CD4-positive, alpha-beta memory T cell (primary cell): ENCODE measurements at regions of chr10 and their contacts with region 1.

Region 1: DNA sequence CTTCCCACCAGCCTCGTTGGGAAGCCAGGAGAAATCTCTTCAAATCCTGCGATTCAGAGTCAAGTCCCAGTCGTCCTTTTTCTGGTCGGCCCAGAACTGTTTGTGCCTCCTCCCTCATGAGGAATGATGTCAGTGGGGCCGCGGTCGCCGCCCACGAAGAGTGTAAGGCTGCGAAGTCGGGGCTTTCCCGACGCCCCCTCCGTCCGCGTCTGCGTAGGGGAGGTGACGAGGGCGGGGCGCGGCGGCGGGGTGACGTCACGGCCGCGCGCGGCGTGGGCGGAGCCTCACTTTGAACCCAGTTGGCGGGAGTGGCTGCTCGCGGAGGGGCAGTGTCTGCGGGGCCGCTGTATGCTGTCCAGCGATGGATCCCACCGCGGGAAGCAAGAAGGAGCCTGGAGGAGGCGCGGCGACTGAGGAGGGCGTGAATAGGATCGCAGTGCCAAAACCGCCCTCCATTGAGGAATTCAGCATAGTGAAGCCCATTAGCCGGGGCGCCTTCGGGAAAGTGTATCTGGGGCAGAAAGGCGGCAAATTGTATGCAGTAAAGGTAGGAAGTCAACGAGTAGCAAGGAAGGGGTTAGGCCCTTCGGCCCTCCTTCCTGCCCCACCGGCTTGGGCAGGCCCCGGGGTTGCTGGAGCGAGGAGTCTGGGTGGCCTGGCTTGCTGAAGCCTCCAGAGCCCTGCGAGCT is at the start of gene MASTL:
- DNase-seq: peak; percentile 94 to 97 (median 96)
- H3K4me3 ChIP-seq: peak within 1 kb of the TSS; percentile 82 to 100
- H3K4me3 Mint-ChIP-seq: peak within 1 kb of the TSS; percentile 95 to 100 (median 98)
- H3K27ac ChIP-seq: peak within 1 kb of the TSS; percentile 100
- H3K27ac Mint-ChIP-seq: peak within 1 kb of the TSS; percentile 100
- H3K4me1 ChIP-seq: peaks cover 40% of the 10 kb centered on the region
- H3K4me1 Mint-ChIP-seq: peaks cover 25 to 67% (median 45%) of the 10 kb centered on the region in 4 donors
- H3K27me3 ChIP-seq: no peaks in the 10 kb centered on the region
- H3K27me3 Mint-ChIP-seq: no peaks in the 10 kb centered on the region
- total RNA-seq, gene MASTL: 7.0 to 7.9 TPM

Region 2: DNA sequence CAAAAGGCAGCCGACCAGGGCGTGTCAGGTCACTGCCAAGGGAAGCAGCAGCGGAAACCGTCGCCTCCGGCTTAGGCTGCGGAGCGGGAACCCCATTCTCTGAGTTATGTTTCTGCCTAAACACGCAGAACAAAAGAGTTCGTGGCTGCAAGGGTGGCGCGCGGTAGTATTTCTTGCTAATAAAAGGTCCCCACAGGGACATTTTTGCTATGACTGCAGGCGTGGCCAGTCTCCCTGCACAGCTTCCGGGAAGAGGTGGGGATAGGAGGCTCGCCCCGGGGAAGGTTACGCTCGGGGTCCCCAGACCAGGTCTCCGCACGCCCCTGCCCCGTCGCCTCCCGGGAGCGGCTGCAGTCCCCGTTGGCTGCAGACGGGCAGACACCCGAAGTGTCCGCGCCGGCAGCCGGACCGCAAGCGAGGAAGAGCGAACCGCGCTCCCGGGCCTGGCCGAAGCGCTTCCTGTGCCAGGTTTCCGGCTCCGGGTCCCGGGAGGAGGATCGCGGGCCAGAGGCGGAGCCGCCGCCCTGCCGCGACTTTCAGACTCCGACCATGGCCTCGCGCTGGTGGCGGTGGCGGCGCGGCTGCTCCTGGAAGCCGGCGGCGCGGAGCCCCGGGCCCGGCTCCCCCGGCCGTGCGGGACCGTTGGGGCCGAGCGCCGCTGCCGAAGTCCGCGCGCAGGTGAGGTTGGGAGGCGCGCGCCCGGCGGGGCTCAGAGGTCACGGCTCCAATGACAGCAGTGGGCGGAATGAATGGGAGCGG is 457.9 kb before region 1 on chr10 and contains the start of gene PDSS1:
- CTCF ChIA-PET with region 1: no interaction called
- POLR2A ChIA-PET with region 1: interaction called, 7 read pairs
- intact Hi-C with region 1: loop called (anchors 10 kb)
- DNase-seq: peak; percentile 53 to 72 (median 56)
- H3K4me3 ChIP-seq: peak within 1 kb of the TSS; percentile 37 to 81
- H3K4me3 Mint-ChIP-seq: peak within 1 kb of the TSS; percentile 86 to 98 (median 97)
- H3K27ac ChIP-seq: peak within 1 kb of the TSS; percentile 50
- H3K27ac Mint-ChIP-seq: peak within 1 kb of the TSS; percentile 88 to 96 (median 95)
- H3K4me1 ChIP-seq: peaks cover 16% of the 10 kb centered on the region
- H3K4me1 Mint-ChIP-seq: peaks cover 19 to 32% (median 28%) of the 10 kb centered on the region in 4 donors
- H3K27me3 ChIP-seq: no peaks in the 10 kb centered on the region
- H3K27me3 Mint-ChIP-seq: no peaks in the 10 kb centered on the region
- total RNA-seq, gene PDSS1: 3.1 to 3.3 TPM

Region 3: GRCh38 chr10:27143686-27144085 is 11.5 kb before region 1 on chr10:
- CTCF ChIA-PET with region 1: interaction called, 5 read pairs
- POLR2A ChIA-PET with region 1: interaction called, 12 read pairs
- intact Hi-C with region 1: no loop called
- DNase-seq: no peak
- H3K4me3 ChIP-seq: no peak overlapping the region
- H3K4me3 Mint-ChIP-seq: no peak overlapping the region
- H3K27ac ChIP-seq: no peak overlapping the region
- H3K27ac Mint-ChIP-seq: peak overlapping the region in 1 of 7 donors; percentile 38
- H3K4me1 ChIP-seq: no peaks in the 10 kb centered on the region
- H3K4me1 Mint-ChIP-seq: peaks cover 0 to 28% (median 10%) of the 10 kb centered on the region in 4 donors
- H3K27me3 ChIP-seq: no peaks in the 10 kb centered on the region
- H3K27me3 Mint-ChIP-seq: no peaks in the 10 kb centered on the region

Region 4: GRCh38 chr10:27252267-27253000 is 97.2 kb after region 1 on chr10:
- CTCF ChIA-PET with region 1: interaction called, 5 read pairs
- POLR2A ChIA-PET with region 1: interaction called, 16 read pairs
- intact Hi-C with region 1: no loop called
- DNase-seq: peak; percentile 74 to 82 (median 78)
- H3K4me3 ChIP-seq: peak overlapping the region in 1 of 2 donors; percentile 47
- H3K4me3 Mint-ChIP-seq: peak overlapping the region; percentile 77 to 88 (median 81)
- H3K27ac ChIP-seq: peak overlapping the region; percentile 58
- H3K27ac Mint-ChIP-seq: peak overlapping the region; percentile 55 to 91 (median 85)
- H3K4me1 ChIP-seq: peaks cover 3% of the 10 kb centered on the region
- H3K4me1 Mint-ChIP-seq: peaks cover 5 to 10% (median 7%) of the 10 kb centered on the region in 4 donors
- H3K27me3 ChIP-seq: no peaks in the 10 kb centered on the region
- H3K27me3 Mint-ChIP-seq: no peaks in the 10 kb centered on the region

Region 5: GRCh38 chr10:27360581-27361172 is 205.5 kb after region 1 on chr10:
- CTCF ChIA-PET with region 1: interaction called, 3 read pairs
- POLR2A ChIA-PET with region 1: no interaction called
- intact Hi-C with region 1: loop called (anchors 5 kb)
- DNase-seq: peak; percentile 78 to 81 (median 81)
- H3K4me3 ChIP-seq: no peak overlapping the region
- H3K4me3 Mint-ChIP-seq: no peak overlapping the region
- H3K27ac ChIP-seq: no peak overlapping the region
- H3K27ac Mint-ChIP-seq: no peak overlapping the region
- H3K4me1 ChIP-seq: no peaks in the 10 kb centered on the region
- H3K4me1 Mint-ChIP-seq: no peaks in the 10 kb centered on the region
- H3K27me3 ChIP-seq: no peaks in the 10 kb centered on the region
- H3K27me3 Mint-ChIP-seq: no peaks in the 10 kb centered on the region